ENCODE measurements at regions of chr5 and their contacts with region 1.

Region 1: GRCh38 chr5:61055434-61056006 is 106.7 kb downstream of the SMIM15 start:
- DNase-seq: peak; percentile 10 to 35 (median 16)
- ATAC-seq: peak; percentile 75
- H3K4me3 ChIP-seq: no peak overlapping the region
- H3K27ac ChIP-seq: no peak overlapping the region
- H3K4me1 ChIP-seq: no peaks in the 10 kb centered on the region
- H3K27me3 ChIP-seq: no peaks in the 10 kb centered on the region
- CTCF ChIP-seq: peak; percentile 49 to 77 (median 59); a peak in 5 of 6 replicates
- EP300 ChIP-seq: no peak
- POLR2A ChIP-seq: no peak
- RAD21 ChIP-seq: peak; percentile 81 to 85

Region 2: DNA sequence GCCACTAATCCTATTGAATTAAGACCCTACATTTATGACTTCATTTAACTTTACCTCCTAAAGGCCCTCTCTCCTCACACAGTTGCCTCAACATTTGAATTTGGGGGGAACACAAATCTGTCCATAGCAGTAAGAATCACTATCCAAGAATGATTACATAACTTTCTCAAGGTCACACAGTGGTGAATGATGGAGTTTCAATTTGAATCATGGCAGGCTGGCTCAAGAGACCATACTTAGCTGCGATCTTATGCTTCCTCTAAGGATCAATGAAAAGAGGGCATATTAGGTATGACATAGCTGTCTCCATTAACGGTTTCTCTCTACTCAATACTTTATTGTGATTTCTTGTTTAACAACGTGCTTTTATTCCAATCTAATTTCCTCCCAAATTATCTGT is 1117.9 kb before region 1 on chr5:
- CTCF ChIA-PET with region 1: no interaction called
- POLR2A ChIA-PET with region 1: no interaction called
- in situ Hi-C with region 1: no loop called
- intact Hi-C with region 1: no loop called
- DNase-seq: no peak
- ATAC-seq: no peak
- H3K4me3 ChIP-seq: no peak overlapping the region
- H3K27ac ChIP-seq: no peak overlapping the region
- H3K4me1 ChIP-seq: no peaks in the 10 kb centered on the region
- H3K27me3 ChIP-seq: no peaks in the 10 kb centered on the region
- CTCF ChIP-seq: no peak
- EP300 ChIP-seq: no peak
- POLR2A ChIP-seq: no peak
- RAD21 ChIP-seq: no peak

Region 3: DNA sequence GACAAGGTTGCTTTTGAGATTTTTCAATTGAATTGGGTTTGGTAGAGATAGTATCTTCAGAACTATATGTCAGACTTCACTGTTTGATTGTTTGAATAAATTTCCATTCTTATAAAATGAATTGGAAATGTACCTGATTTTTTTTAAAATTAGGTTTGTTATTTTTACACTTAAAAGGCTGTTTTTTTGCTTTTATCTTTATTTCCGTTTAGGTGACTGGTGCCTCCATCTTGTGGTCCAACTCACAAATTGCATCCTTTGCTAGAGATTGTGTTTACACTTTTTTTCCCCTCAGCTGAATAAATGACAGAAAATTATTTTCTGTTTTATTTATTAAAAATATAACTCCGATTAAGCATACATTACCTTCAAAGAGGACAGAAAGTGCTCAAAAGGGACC is 94.9 kb before region 1 on chr5:
- CTCF ChIA-PET with region 1: no interaction called
- POLR2A ChIA-PET with region 1: no interaction called
- in situ Hi-C with region 1: no loop called
- intact Hi-C with region 1: loop called (anchors 10 kb)
- DNase-seq: peak in 2 of 4 experiments; percentile 23 to 32
- ATAC-seq: peak; percentile 51; the same call in 1 of the 3 replicates
- H3K4me3 ChIP-seq: no peak overlapping the region
- H3K27ac ChIP-seq: no peak overlapping the region
- H3K4me1 ChIP-seq: no peaks in the 10 kb centered on the region
- H3K27me3 ChIP-seq: no peaks in the 10 kb centered on the region
- CTCF ChIP-seq: peak; percentile 35 to 53 (median 42); a peak in 3 of 6 replicates
- EP300 ChIP-seq: no peak
- POLR2A ChIP-seq: no peak
- RAD21 ChIP-seq: peak; percentile 53 to 66

Region 4: GRCh38 chr5:61030163-61030482 is 25.4 kb before region 1 on chr5:
- CTCF ChIA-PET with region 1: no interaction called
- POLR2A ChIA-PET with region 1: no interaction called
- in situ Hi-C with region 1: no loop called
- intact Hi-C with region 1: no loop called
- DNase-seq: no peak
- ATAC-seq: no peak
- H3K4me3 ChIP-seq: no peak overlapping the region
- H3K27ac ChIP-seq: no peak overlapping the region
- H3K4me1 ChIP-seq: no peaks in the 10 kb centered on the region
- H3K27me3 ChIP-seq: no peaks in the 10 kb centered on the region
- CTCF ChIP-seq: no peak
- EP300 ChIP-seq: no peak
- POLR2A ChIP-seq: no peak
- RAD21 ChIP-seq: no peak

Region 5: GRCh38 chr5:61089351-61089750 is 33.8 kb after region 1 on chr5:
- CTCF ChIA-PET with region 1: no interaction called
- POLR2A ChIA-PET with region 1: no interaction called
- in situ Hi-C with region 1: no loop called
- intact Hi-C with region 1: no loop called
- DNase-seq: no peak
- ATAC-seq: no peak
- H3K4me3 ChIP-seq: no peak overlapping the region
- H3K27ac ChIP-seq: no peak overlapping the region
- H3K4me1 ChIP-seq: peaks cover 3 to 9% of the 10 kb centered on the region in 2 experiments; a peak in 4 of 5 replicates
- H3K27me3 ChIP-seq: no peaks in the 10 kb centered on the region
- CTCF ChIP-seq: no peak
- EP300 ChIP-seq: no peak
- POLR2A ChIP-seq: no peak
- RAD21 ChIP-seq: no peak

Region 6: GRCh38 chr5:61115968-61116367 is 60.4 kb after region 1 on chr5:
- CTCF ChIA-PET with region 1: no interaction called
- POLR2A ChIA-PET with region 1: no interaction called
- in situ Hi-C with region 1: no loop called
- intact Hi-C with region 1: no loop called
- DNase-seq: no peak
- ATAC-seq: no peak
- H3K4me3 ChIP-seq: no peak overlapping the region
- H3K27ac ChIP-seq: no peak overlapping the region
- H3K4me1 ChIP-seq: no peaks in the 10 kb centered on the region
- H3K27me3 ChIP-seq: no peaks in the 10 kb centered on the region
- CTCF ChIP-seq: no peak
- EP300 ChIP-seq: no peak
- POLR2A ChIP-seq: no peak
- RAD21 ChIP-seq: no peak

Region 7: GRCh38 chr5:61162010-61162831 is 106.7 kb after region 1 on chr5 and contains the start of gene SMIM15:
- CTCF ChIA-PET with region 1: no interaction called
- POLR2A ChIA-PET with region 1: no interaction called
- in situ Hi-C with region 1: no loop called
- intact Hi-C with region 1: loop called (anchors 10 kb)
- DNase-seq: peak; percentile 87 to 95 (median 90)
- ATAC-seq: peak; percentile 93
- H3K4me3 ChIP-seq: peak within 1 kb of the TSS; percentile 69
- H3K27ac ChIP-seq: peak within 1 kb of the TSS; percentile 97
- H3K4me1 ChIP-seq: peaks cover 0 to 18% of the 10 kb centered on the region in 2 experiments; a peak in 3 of 5 replicates
- H3K27me3 ChIP-seq: no peaks in the 10 kb centered on the region
- CTCF ChIP-seq: no peak
- EP300 ChIP-seq: 0 out of 2 replicates have a peak, but pooled peaks have one; percentile 14
- POLR2A ChIP-seq: peak; percentile 92
- RAD21 ChIP-seq: no peak
- polyA plus RNA-seq, gene SMIM15: 16.6 to 19.7 TPM

Region 8: GRCh38 chr5:61625681-61626621 is 570.4 kb after region 1 on chr5:
- CTCF ChIA-PET with region 1: no interaction called
- POLR2A ChIA-PET with region 1: no interaction called
- in situ Hi-C with region 1: loop called (anchors 25 kb)
- intact Hi-C with region 1: no loop called
- DNase-seq: peak in 3 of 4 experiments; percentile 15 to 30 (median 27)
- ATAC-seq: peak; percentile 88
- H3K4me3 ChIP-seq: peak overlapping the region; percentile 12; the same call in 1 of the 2 replicates
- H3K27ac ChIP-seq: no peak overlapping the region
- H3K4me1 ChIP-seq: peaks cover 0 to 12% of the 10 kb centered on the region in 2 experiments; a peak in 2 of 5 replicates
- H3K27me3 ChIP-seq: peaks cover 9 to 33% of the 10 kb centered on the region in 2 experiments; a peak in 4 of 5 replicates
- CTCF ChIP-seq: no peak
- EP300 ChIP-seq: no peak
- POLR2A ChIP-seq: no peak
- RAD21 ChIP-seq: no peak

Region 9: DNA sequence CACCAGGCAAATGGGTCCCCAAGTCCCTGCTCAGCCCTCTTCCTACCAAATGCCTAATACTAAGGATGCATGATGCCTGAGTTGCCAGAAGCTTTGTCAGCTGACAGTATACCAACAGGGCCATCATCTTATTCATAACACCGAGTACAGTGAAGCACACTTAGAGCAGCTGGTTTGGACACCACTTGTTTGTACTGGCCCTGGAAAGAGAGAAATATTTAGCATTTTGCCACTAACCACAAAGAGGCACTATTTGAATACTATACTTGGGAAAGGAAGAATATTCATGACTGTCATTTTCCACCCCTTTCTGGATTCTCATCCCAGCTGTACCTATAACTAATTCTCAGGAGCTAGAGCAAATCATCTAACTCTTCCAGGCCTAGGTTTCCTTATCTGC is 886.1 kb after region 1 on chr5:
- CTCF ChIA-PET with region 1: no interaction called
- POLR2A ChIA-PET with region 1: no interaction called
- in situ Hi-C with region 1: no loop called
- intact Hi-C with region 1: loop called (anchors 5 kb)
- DNase-seq: no peak
- ATAC-seq: no peak
- H3K4me3 ChIP-seq: no peak overlapping the region
- H3K27ac ChIP-seq: no peak overlapping the region
- H3K4me1 ChIP-seq: no peaks in the 10 kb centered on the region
- H3K27me3 ChIP-seq: no peaks in the 10 kb centered on the region
- CTCF ChIP-seq: no peak
- EP300 ChIP-seq: no peak
- POLR2A ChIP-seq: no peak
- RAD21 ChIP-seq: no peak